Natural killer cell (primary cell): ENCODE measurements at regions of chr2 and their contacts with region 1.

Region 1: GRCh38 chr2:166127217-166128155 is at the start of gene SCN1A:
- DNase-seq: peak in 1 of 2 donors; percentile 55
- ATAC-seq: peak in 1 of 3 donors; percentile 39
- H3K4me3 ChIP-seq: no peak within 1 kb of the TSS
- H3K4me3 Mint-ChIP-seq: no peak within 1 kb of the TSS
- H3K27ac ChIP-seq: no peak within 1 kb of the TSS
- H3K27ac Mint-ChIP-seq: no peak within 1 kb of the TSS
- H3K4me1 ChIP-seq: no peaks in the 10 kb centered on the region
- H3K4me1 Mint-ChIP-seq: peaks cover 0 to 5% of the 10 kb centered on the region in 2 donors
- H3K27me3 ChIP-seq: no peaks in the 10 kb centered on the region
- H3K27me3 Mint-ChIP-seq: peaks cover 8 to 24% of the 10 kb centered on the region in 2 donors
- CTCF ChIP-seq: peak; percentile 73
- total RNA-seq, gene SCN1A: not detected

Region 2: DNA sequence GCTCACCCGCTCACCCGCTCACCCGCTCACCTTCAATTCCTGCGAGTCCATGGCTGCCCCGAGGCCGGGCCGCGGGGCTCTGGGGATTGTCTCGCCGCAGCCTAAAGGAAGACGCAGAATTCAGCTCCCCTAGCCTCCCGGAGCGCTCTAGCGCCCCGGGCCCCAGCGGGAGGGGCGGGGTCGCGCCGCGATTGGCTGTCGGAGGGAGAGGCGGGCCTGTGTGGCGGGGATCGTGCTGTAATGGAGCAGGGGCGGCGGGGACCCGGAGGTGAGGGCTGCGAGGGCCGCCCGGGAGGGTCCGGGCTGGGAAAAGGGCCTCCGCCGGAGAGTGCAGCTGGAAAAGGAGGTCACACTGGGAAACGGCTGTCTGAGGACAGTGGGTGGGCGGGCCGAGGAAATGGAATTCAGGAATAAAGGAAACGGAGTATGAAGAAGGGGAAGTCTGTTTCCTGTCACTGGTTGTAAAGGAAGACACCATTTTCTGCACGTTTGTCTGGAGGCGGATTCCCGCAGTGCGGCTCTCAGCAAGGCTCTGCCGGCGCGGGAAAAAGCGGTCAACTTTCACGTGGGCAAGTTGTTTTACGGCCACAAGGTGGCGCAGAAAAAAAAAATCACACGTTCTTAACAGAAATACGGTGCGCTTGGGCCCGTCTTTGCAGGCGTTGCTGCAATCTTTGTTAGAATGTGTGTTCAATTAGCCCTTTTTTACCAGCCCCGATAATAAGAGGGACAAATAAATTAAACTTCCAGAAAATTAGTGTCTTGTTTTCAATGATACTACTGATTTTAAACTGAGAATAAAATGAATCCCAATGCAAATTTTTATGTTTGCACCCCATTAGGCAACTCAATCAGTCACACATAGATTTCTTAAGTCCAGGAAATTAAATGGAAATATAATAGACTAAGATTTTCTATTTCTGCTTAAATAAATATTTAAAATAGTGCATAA is 173.6 kb before region 1 on chr2 and contains the start of gene TTC21B:
- intact Hi-C with region 1: loop called (anchors 2 kb)
- DNase-seq: peak; percentile 90 to 96
- ATAC-seq: peak; percentile 93 to 98 (median 94)
- H3K4me3 ChIP-seq: peak within 1 kb of the TSS; percentile 78
- H3K4me3 Mint-ChIP-seq: no peak within 1 kb of the TSS
- H3K27ac ChIP-seq: peak within 1 kb of the TSS; percentile 74
- H3K27ac Mint-ChIP-seq: no peak within 1 kb of the TSS
- H3K4me1 ChIP-seq: peaks cover 5% of the 10 kb centered on the region
- H3K4me1 Mint-ChIP-seq: peaks cover 11 to 13% of the 10 kb centered on the region in 2 donors
- H3K27me3 ChIP-seq: no peaks in the 10 kb centered on the region
- H3K27me3 Mint-ChIP-seq: no peaks in the 10 kb centered on the region
- CTCF ChIP-seq: peak; percentile 85
- total RNA-seq, gene TTC21B: 31.7 to 40.1 (median 34.3) TPM

Region 3: DNA sequence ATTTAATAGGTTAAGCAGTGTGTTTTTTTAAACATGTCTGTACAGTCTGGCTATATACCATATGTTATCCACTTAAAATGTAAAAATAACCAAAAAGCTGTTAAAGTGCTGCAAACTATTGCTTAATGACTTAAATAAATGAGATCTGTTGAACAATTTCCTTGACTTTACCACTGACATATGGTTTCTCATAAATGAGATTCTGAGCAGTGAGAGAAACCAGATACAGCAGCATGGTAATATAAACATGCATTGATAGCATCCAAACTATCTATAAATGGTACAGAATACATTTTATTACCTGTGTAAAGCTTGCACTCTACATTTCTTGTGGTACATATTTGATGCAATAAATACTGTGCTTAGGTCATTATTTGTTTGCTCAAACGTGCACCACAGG is 137.6 kb before region 1 on chr2:
- intact Hi-C with region 1: no loop called
- DNase-seq: no peak
- ATAC-seq: no peak
- H3K4me3 ChIP-seq: no peak overlapping the region
- H3K4me3 Mint-ChIP-seq: no peak overlapping the region
- H3K27ac ChIP-seq: no peak overlapping the region
- H3K27ac Mint-ChIP-seq: no peak overlapping the region
- H3K4me1 ChIP-seq: no peaks in the 10 kb centered on the region
- H3K4me1 Mint-ChIP-seq: no peaks in the 10 kb centered on the region
- H3K27me3 ChIP-seq: peaks cover 2% of the 10 kb centered on the region
- H3K27me3 Mint-ChIP-seq: peaks cover 10 to 24% of the 10 kb centered on the region in 2 donors
- CTCF ChIP-seq: no peak

Region 4: GRCh38 chr2:166223298-166223697 is 95.8 kb after region 1 on chr2:
- intact Hi-C with region 1: no loop called
- DNase-seq: no peak
- ATAC-seq: no peak
- H3K4me3 ChIP-seq: no peak overlapping the region
- H3K4me3 Mint-ChIP-seq: no peak overlapping the region
- H3K27ac ChIP-seq: no peak overlapping the region
- H3K27ac Mint-ChIP-seq: no peak overlapping the region
- H3K4me1 ChIP-seq: no peaks in the 10 kb centered on the region
- H3K4me1 Mint-ChIP-seq: no peaks in the 10 kb centered on the region
- H3K27me3 ChIP-seq: no peaks in the 10 kb centered on the region
- H3K27me3 Mint-ChIP-seq: no peaks in the 10 kb centered on the region
- CTCF ChIP-seq: no peak